Naive thymus-derived CD8-positive, alpha-beta T cell (primary cell): ENCODE measurements at regions of chr13 and their contacts with region 1.

Region 1: DNA sequence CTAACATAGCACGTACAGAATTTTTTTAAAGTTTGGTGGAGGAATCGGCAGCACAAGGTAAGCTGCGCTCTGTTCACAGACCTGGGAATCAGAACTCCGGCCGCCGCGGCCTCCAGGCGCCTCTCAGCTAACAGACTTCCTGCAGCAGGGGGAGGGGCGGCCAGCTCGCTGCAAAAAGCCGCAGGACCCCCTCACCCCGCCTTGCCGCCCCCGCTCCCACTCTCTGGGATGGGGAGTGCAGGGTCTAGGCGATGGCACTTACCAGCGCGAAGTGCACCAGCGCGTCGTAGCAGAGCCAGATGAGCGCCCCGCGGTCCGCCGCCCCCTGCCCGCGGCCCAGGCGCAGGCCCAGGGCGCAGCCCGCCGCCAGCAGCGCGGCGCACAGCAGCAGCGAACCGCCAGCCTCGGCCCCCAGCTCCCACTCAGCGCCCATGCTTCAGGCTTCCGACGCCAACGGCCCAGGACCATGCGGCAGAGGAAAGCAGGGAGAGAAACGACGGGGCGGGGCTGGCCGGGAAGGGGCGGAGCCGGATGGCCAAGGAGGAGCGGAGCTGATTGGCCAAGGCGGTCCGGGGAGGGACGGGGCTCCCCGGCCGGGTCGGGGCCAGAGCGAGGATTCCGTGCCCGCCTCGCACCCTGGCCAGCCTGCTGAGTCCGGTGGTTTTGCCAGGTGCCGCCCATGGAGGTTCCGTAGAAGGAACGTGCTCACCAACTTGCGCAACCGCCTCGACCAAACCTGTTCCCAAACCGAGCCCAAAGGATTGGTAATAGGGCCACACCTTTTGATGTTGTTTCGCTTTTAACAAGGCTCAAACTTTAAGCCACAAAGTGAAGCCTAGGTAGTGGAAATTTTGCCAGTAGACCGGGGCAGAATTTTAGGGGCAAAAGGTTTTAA is at the start of gene EBPL:
- DNase-seq: peak; percentile 63 to 91 (median 78)
- ATAC-seq: peak; percentile 91 to 94
- H3K4me3 Mint-ChIP-seq: peak within 1 kb of the TSS; percentile 82 to 94 (median 89)
- H3K27ac Mint-ChIP-seq: peak within 1 kb of the TSS; percentile 15 to 92 (median 83)
- H3K4me1 Mint-ChIP-seq: peaks cover 13 to 51% (median 27%) of the 10 kb centered on the region in 4 donors
- H3K27me3 Mint-ChIP-seq: no peaks in the 10 kb centered on the region
- polyA plus RNA-seq, gene EBPL: 57.0 to 76.5 (median 63.3) TPM

Region 2: GRCh38 chr13:49669735-49670309 is 21.4 kb before region 1 on chr13:
- POLR2A ChIA-PET with region 1: no interaction called
- DNase-seq: peak in 2 of 10 donors; percentile 16 to 44
- ATAC-seq: peak in 1 of 2 donors; percentile 39
- H3K4me3 Mint-ChIP-seq: no peak overlapping the region
- H3K27ac Mint-ChIP-seq: peak overlapping the region in 1 of 10 donors; percentile 26
- H3K4me1 Mint-ChIP-seq: peaks cover 0 to 9% (median 0%) of the 10 kb centered on the region in 4 donors
- H3K27me3 Mint-ChIP-seq: no peaks in the 10 kb centered on the region

Region 3: GRCh38 chr13:49792550-49793324 is 101.5 kb after region 1 on chr13 and contains the start of gene KPNA3:
- POLR2A ChIA-PET with region 1: interaction called, 24 read pairs
- DNase-seq: peak; percentile 90 to 97 (median 94)
- ATAC-seq: peak; percentile 87 to 89
- H3K4me3 Mint-ChIP-seq: peak within 1 kb of the TSS; percentile 84 to 99 (median 98)
- H3K27ac Mint-ChIP-seq: peak within 1 kb of the TSS; percentile 89 to 100 (median 98)
- H3K4me1 Mint-ChIP-seq: peaks cover 17 to 39% (median 32%) of the 10 kb centered on the region in 4 donors
- H3K27me3 Mint-ChIP-seq: peaks cover 0 to 10% (median 3%) of the 10 kb centered on the region in 5 donors
- polyA plus RNA-seq, gene KPNA3: 20.2 to 23.9 (median 20.3) TPM